Activated naive CD4-positive, alpha-beta T cell treated with anti-CD3 and anti-CD28 coated beads, Interleukin-2, amount 10 ng/mL, durations not matched to agents 7 days and 5 days (primary cell): ENCODE measurements at regions of chr22 and their contacts with region 1.

Region 1: DNA sequence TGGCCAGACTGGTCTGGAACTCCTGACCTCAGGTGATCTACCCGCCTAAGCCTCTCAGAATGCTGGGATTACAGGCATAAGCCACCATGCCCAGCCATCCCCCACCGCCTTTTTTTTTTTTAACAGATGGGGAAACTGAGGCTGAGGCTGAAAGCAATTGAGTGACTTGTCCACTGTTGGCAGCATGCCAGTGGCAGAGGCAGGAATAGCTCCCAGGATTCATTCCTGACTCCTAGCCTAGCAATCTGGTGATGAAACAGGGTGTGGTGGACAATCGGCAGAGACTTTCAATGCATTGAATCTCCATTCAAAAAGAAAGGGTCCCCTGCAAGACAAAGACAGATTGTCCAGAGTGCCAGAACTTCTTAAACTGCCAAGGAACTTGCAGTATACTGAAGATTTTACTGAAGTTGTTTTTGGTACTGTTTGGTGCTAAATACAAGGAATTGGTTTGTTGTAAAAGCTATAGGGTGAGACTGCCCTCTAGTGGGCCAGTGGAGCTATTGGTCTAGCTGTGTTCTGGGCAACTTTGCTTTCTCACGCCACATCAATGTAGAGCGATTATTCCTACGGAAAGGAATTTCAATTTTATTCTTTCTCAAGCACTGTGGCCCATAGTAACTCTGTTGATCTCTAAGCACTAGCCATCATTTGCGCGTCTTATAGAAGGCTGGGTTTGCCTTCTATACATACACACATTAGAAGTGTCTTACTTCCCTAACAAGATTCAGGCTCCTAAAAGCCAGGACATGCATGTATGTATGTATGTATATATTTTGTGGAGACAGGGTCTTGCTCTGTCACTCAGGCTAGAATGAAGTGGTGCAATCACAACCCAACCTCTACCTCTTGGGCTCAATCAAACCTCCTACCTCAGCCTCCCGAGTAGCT is 21.0 kb downstream of the C22orf31 start:
- DNase-seq: peak; percentile 77
- H3K4me3 Mint-ChIP-seq: no peak overlapping the region
- H3K27ac Mint-ChIP-seq: no peak overlapping the region
- H3K4me1 Mint-ChIP-seq: no peaks in the 10 kb centered on the region
- H3K27me3 Mint-ChIP-seq: peaks cover 31% of the 10 kb centered on the region

Region 2: DNA sequence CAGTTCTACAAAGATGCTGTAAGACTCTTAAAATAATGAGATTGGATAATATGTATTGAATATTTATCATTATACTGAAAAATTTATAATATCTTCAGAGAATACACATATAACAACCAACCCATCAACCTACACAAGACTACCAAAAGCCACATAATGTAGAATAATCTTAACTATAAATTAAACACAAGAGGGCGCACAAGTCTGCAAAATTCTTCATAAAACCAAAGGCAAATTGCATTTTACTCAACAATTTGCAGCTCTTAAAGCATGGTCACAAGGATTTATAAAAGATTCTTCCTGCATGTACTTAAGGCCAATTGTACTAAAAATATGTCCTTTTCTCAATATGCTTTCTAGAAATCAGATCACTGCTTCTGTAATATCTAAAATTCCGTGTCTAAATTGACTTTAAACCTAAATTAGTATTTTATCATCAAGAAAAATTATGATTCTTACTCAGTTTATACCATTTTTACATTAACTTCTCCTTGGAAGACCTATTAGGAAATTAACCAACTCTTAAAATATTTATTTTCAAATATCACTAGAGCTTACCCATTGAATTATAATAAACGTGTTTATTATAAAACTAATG is 440.0 kb before region 1 on chr22:
- CTCF ChIA-PET with region 1: interaction called, 34 read pairs
- DNase-seq: no peak
- H3K4me3 Mint-ChIP-seq: no peak overlapping the region
- H3K27ac Mint-ChIP-seq: no peak overlapping the region
- H3K4me1 Mint-ChIP-seq: no peaks in the 10 kb centered on the region
- H3K27me3 Mint-ChIP-seq: peaks cover 36% of the 10 kb centered on the region

Region 3: GRCh38 chr22:28855355-28856094 is 185.1 kb before region 1 on chr22:
- CTCF ChIA-PET with region 1: interaction called, 45 read pairs
- DNase-seq: peak; percentile 58
- H3K4me3 Mint-ChIP-seq: no peak overlapping the region
- H3K27ac Mint-ChIP-seq: no peak overlapping the region
- H3K4me1 Mint-ChIP-seq: no peaks in the 10 kb centered on the region
- H3K27me3 Mint-ChIP-seq: peaks cover 10% of the 10 kb centered on the region

Region 4: GRCh38 chr22:29245637-29246385 is 205.2 kb after region 1 on chr22:
- CTCF ChIA-PET with region 1: interaction called, 15 read pairs
- DNase-seq: peak; percentile 76
- H3K4me3 Mint-ChIP-seq: no peak overlapping the region
- H3K27ac Mint-ChIP-seq: no peak overlapping the region
- H3K4me1 Mint-ChIP-seq: no peaks in the 10 kb centered on the region
- H3K27me3 Mint-ChIP-seq: peaks cover 44% of the 10 kb centered on the region